ENCODE measurements at regions of chr18 and their contacts with region 1.

Region 1: DNA sequence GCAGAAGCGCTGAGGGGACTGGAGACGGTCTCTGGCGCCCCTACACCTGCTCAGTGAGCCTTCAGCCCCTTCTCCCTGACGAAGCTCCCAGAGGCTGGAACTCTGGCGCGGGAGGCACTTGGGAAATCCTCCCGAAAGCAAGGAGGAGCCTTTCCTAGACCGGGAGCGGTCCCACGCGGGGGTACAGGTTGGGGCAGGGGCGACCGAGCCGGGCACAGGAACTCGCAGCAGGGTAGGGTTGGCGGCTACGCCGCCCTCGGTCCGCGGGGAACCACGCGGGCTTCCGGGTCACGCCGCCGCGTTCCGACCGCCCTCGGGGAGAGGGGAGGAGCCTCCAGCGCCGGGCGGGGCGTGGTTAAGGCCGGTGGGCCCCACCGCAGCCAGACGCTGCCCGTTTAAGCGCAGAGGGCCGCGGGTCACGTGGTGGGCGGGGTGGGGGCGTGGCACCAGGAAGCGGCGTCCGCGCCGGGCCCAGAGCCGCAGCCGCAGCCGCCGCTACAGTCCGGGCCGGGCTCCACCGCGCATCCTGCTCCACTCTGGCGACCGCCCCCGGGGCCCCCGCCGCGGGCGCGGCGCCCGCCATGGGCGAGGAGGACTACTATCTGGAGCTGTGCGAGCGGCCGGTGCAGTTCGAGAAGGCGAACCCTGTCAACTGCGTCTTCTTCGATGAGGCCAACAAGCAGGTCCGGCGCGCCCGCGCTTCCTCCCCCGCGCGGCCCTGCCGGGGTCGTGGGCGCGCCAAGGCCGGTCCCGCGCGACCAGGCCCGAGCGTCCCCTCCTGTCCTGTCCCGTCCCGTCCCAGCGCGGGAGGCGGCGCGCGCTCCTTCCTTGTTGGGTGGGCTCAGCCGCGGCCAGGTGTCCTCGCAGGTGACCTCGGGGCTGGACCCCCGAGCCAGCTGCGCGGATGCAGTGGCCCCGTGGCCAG is at the start of gene RMC1:
- DNase-seq: peak; percentile 93
- H3K4me3 ChIP-seq: peak within 1 kb of the TSS; percentile 79 to 90
- H3K27ac ChIP-seq: peak within 1 kb of the TSS; percentile 91 to 92
- H3K4me1 ChIP-seq: no peaks in the 10 kb centered on the region
- H3K27me3 ChIP-seq: no peaks in the 10 kb centered on the region
- CTCF ChIP-seq: peak in 2 of 4 experiments; percentile 12 to 32
- POLR2A ChIP-seq: peak; percentile 72
- total RNA-seq, gene RMC1: 12.0 to 28.5 TPM

Region 2: DNA sequence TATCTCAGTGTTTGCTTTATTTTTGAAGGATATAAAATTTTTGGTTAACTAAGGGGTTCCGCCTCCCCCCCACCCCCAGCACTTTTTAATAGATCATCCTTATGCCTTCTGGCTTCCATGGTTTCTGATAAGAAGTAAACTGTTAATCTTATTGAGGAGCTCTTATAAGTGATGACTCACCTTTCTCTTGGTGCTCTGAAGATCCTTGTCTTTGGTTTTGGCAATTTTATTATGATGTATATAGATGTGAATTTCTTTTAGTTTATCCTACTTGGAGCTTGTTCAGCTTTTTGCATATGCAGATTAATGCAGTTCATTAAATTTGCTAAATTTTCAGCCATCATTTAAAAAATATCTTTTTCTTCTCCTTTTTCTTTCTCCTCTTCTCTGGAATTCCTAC is 993.9 kb before region 1 on chr18:
- intact Hi-C with region 1: no loop called
- DNase-seq: no peak
- H3K4me3 ChIP-seq: no peak overlapping the region
- H3K27ac ChIP-seq: no peak overlapping the region
- H3K4me1 ChIP-seq: no peaks in the 10 kb centered on the region
- H3K27me3 ChIP-seq: no peaks in the 10 kb centered on the region
- CTCF ChIP-seq: no peak
- POLR2A ChIP-seq: no peak

Region 3: DNA sequence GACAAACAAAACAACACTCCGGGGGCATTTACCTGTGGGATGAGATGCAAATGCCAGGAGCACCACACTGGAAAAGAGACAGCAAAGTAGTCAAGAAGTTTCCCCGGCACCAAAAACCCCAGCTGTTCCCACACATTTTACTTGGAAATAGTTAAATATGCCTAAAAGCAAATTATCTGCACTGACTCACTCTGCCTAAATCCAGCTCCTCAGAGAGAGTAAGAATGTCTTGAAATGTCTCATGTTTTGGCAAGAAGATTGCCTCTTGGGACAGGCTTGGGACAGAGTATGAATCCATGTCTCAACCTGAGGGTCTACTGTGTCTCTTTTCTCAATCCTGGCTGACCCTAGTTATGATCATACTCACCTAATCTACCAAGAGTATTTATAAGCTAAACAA is 137.7 kb before region 1 on chr18:
- intact Hi-C with region 1: no loop called
- DNase-seq: no peak
- H3K4me3 ChIP-seq: no peak overlapping the region
- H3K27ac ChIP-seq: no peak overlapping the region
- H3K4me1 ChIP-seq: no peaks in the 10 kb centered on the region
- H3K27me3 ChIP-seq: no peaks in the 10 kb centered on the region
- CTCF ChIP-seq: no peak
- POLR2A ChIP-seq: no peak

Region 4: GRCh38 chr18:23437357-23438045 is 65.8 kb before region 1 on chr18:
- intact Hi-C with region 1: loop called (anchors 5 kb)
- DNase-seq: peak; percentile 67
- H3K4me3 ChIP-seq: peak overlapping the region; percentile 53 to 57
- H3K27ac ChIP-seq: peak overlapping the region; percentile 4 to 21
- H3K4me1 ChIP-seq: no peaks in the 10 kb centered on the region
- H3K27me3 ChIP-seq: no peaks in the 10 kb centered on the region
- CTCF ChIP-seq: peak in 1 of 4 experiments; percentile 25
- POLR2A ChIP-seq: no peak

Region 5: GRCh38 chr18:23452728-23453679 is 50.3 kb before region 1 on chr18 and contains the start of gene RIOK3:
- intact Hi-C with region 1: loop called (anchors 2 kb)
- DNase-seq: peak; percentile 97
- H3K4me3 ChIP-seq: peak within 1 kb of the TSS; percentile 89 to 91
- H3K27ac ChIP-seq: peak within 1 kb of the TSS; percentile 93 to 94
- H3K4me1 ChIP-seq: peaks cover 2% of the 10 kb centered on the region
- H3K27me3 ChIP-seq: no peaks in the 10 kb centered on the region
- CTCF ChIP-seq: peak in 1 of 4 experiments; percentile 27
- POLR2A ChIP-seq: peak; percentile 97
- total RNA-seq, gene RIOK3: 40.6 to 44.6 TPM

Region 6: GRCh38 chr18:23586249-23587196 is 83.2 kb after region 1 on chr18 and contains the start of gene NPC1:
- intact Hi-C with region 1: loop called (anchors 5 kb)
- DNase-seq: peak; percentile 91
- H3K4me3 ChIP-seq: peak within 1 kb of the TSS; percentile 79 to 92
- H3K27ac ChIP-seq: peak within 1 kb of the TSS; percentile 100
- H3K4me1 ChIP-seq: no peaks in the 10 kb centered on the region
- H3K27me3 ChIP-seq: no peaks in the 10 kb centered on the region
- CTCF ChIP-seq: peak; percentile 94 to 97 (median 96)
- POLR2A ChIP-seq: peak; percentile 85
- total RNA-seq, gene NPC1: 32.0 to 63.5 TPM